Naive thymus-derived CD8-positive, alpha-beta T cell (primary cell): ENCODE measurements at regions of chr16 and their contacts with region 1.

Region 1: DNA sequence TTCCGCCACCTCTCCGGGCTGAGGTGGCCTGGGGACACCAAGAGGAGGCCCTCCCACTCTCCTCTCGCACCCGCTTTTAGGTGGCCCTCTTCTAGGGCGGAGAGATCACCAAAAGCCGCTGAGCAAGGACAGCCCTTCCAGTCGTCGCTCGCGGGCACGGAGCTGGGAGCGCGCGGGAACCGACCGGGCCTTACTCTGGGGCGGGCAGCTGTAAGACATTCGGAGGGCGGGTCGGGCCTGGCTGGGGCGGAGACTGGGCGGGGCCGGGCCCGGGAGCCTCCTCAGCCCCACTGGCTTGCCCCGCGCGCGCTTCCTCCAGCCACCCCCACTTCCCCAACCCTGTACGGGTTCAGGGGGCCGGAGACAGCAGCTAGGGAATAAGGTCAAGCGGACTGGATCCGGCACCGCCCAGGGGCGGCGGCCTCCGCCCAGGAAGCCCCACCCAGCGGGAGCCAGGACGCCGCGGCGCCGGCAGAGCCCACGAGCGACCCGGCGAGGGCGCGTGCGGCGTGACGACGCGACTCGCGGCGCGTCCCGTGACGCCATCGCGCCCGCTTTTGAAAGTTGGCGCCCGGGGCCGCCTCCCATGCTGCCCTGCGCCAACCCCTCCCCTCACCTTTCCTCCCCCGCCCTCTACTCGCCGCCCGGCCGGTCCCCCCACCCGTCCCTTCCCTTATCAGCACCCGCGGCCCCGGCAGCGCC is 351 bp upstream of the CTCF start:
- DNase-seq: peak; percentile 91 to 98 (median 96)
- ATAC-seq: peak; percentile 74
- H3K4me3 Mint-ChIP-seq: peak overlapping the region; percentile 87 to 95 (median 90)
- H3K27ac Mint-ChIP-seq: peak overlapping the region; percentile 72 to 98 (median 96)
- H3K4me1 Mint-ChIP-seq: peaks cover 14 to 64% (median 45%) of the 10 kb centered on the region in 4 donors
- H3K27me3 Mint-ChIP-seq: no peaks in the 10 kb centered on the region

Region 2: GRCh38 chr16:67521095-67521804 is 40.7 kb before region 1 on chr16:
- POLR2A ChIA-PET with region 1: interaction called, 15 read pairs
- DNase-seq: peak; percentile 90 to 98 (median 94)
- ATAC-seq: peak; percentile 88 to 90
- H3K4me3 Mint-ChIP-seq: peak overlapping the region; percentile 86 to 96 (median 92)
- H3K27ac Mint-ChIP-seq: peak overlapping the region; percentile 84 to 99 (median 97)
- H3K4me1 Mint-ChIP-seq: peaks cover 22 to 52% (median 46%) of the 10 kb centered on the region in 4 donors
- H3K27me3 Mint-ChIP-seq: no peaks in the 10 kb centered on the region

Region 3: GRCh38 chr16:67546761-67547422 is 15.1 kb before region 1 on chr16:
- POLR2A ChIA-PET with region 1: interaction called, 485 read pairs
- DNase-seq: peak; percentile 58 to 88 (median 74)
- ATAC-seq: peak; percentile 36 to 57
- H3K4me3 Mint-ChIP-seq: peak overlapping the region; percentile 70 to 90 (median 84)
- H3K27ac Mint-ChIP-seq: peak overlapping the region; percentile 81 to 99 (median 96)
- H3K4me1 Mint-ChIP-seq: peaks cover 34 to 71% (median 60%) of the 10 kb centered on the region in 4 donors
- H3K27me3 Mint-ChIP-seq: no peaks in the 10 kb centered on the region

Region 4: GRCh38 chr16:67598527-67598926 is 36.6 kb after region 1 on chr16:
- POLR2A ChIA-PET with region 1: no interaction called
- DNase-seq: no peak
- ATAC-seq: no peak
- H3K4me3 Mint-ChIP-seq: no peak overlapping the region
- H3K27ac Mint-ChIP-seq: peak overlapping the region in 3 of 10 donors; percentile 11 to 74 (median 33)
- H3K4me1 Mint-ChIP-seq: peaks cover 23 to 57% (median 52%) of the 10 kb centered on the region in 4 donors
- H3K27me3 Mint-ChIP-seq: no peaks in the 10 kb centered on the region

Region 5: DNA sequence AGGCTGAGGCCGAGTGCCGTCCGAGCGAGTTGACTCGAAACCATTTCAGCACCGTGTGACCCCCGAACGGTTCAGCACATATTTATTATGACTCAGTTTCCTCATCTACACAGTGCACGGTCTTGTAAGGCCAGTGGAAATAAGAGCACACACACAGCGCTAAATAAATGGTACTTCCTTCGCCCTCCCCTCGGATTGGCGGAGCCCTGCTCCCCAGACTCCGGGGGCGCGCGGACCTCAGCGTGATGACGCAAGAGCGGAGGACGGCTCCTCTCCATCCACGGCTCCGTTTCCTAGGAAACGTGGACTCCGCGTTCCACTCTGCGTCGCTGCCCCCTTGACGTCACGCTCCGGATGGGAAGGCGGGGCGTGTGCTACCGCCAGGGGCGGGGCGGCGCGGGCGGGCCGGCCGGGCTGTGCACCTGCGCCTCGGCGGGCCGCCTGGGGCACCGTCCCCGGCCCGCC is 98.6 kb after region 1 on chr16 and contains the start of gene PARD6A:
- POLR2A ChIA-PET with region 1: interaction called, 23 read pairs
- DNase-seq: peak; percentile 89 to 98 (median 94)
- ATAC-seq: peak; percentile 80 to 83
- H3K4me3 Mint-ChIP-seq: peak within 1 kb of the TSS; percentile 88 to 97 (median 94)
- H3K27ac Mint-ChIP-seq: peak within 1 kb of the TSS; percentile 91 to 99 (median 97)
- H3K4me1 Mint-ChIP-seq: peaks cover 7 to 45% (median 27%) of the 10 kb centered on the region in 4 donors
- H3K27me3 Mint-ChIP-seq: no peaks in the 10 kb centered on the region
- polyA plus RNA-seq, gene PARD6A: 10.6 to 13.3 (median 11.2) TPM

Region 6: DNA sequence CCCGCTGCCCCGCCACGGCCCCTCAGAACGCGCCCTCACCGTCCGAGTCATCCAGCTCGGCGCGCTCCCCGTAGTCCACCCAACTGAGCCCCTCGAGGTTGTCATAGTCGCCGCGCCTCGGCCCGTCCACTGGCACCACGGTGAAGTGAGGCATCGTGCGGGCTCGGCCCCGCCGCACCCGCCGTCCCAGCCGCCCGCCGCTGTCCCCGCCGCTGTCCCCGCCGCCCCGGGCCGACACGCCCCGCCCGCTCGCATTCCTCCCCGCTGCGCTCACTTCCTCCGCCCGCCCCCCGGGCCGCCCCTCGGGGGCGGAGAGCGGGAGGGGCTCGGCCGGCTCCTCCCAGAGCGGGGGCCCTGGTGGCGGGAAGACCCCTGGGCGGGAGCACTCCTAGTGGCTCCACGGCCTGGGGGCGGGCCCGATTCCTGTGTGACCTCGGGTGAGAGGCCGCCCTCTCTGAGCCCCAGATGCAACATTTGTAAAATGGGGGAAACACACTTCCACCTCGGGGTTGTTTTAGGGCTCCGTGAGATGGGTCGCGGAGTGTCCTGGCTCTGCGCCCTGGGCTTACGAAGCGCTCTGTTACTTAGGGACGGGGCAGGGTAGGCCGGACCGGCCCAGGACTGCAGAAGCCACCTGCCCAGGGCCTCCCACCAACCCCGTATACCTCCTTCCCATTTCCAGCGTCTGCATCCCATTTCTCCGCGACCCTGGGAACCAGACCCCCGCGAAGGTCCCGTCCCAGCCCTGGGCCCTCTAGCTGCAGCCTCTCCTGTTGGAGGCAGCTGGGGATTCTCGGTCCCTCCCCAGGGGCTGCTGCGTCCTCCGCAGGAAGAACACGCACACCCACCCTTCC is 406.7 kb after region 1 on chr16 and contains the start of gene SLC12A4:
- POLR2A ChIA-PET with region 1: no interaction called
- DNase-seq: peak; percentile 78 to 92 (median 88)
- ATAC-seq: peak; percentile 87 to 90
- H3K4me3 Mint-ChIP-seq: peak within 1 kb of the TSS; percentile 87 to 99 (median 97)
- H3K27ac Mint-ChIP-seq: peak within 1 kb of the TSS; percentile 80 to 97 (median 92)
- H3K4me1 Mint-ChIP-seq: peaks cover 13 to 38% (median 32%) of the 10 kb centered on the region in 4 donors
- H3K27me3 Mint-ChIP-seq: no peaks in the 10 kb centered on the region
- polyA plus RNA-seq, gene SLC12A4: 3.0 to 5.6 (median 5.2) TPM